GM12878 (cell line): ENCODE measurements at regions of chr12 and their contacts with region 1.

Region 1: DNA sequence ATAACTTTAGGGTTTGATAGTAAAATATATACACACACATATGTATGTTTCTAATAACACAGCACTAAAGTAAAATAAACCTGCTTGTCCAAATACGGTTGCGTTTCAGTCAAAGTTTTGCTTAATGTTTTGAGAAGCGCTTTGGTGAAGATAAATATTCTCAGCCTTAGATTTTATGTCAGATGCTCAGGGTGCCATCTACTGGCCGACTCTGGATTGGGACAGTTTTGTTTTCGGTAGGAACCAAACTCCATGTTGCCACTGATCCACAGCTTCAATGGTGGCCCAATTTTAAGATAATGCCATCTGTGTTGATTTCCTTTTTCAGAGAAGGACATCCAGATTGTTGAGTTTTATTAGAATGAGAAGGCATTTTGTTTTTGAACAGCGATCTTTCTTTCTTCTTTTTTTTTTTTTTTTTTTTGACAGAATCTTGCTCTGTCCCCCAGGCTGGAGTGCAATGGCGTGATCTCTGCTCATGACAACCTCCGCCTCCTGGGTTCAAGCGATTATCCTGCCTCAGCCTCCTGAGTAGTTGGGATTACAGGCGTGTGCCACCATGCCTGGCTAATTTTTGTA is 43.1 kb downstream of the LLPH start:
- DNase-seq: no peak
- ATAC-seq: peak; percentile 95
- H3K4me3 ChIP-seq: no peak overlapping the region
- H3K27ac ChIP-seq: peak overlapping the region; percentile 28; the same call in 1 of the 2 replicates
- H3K4me1 ChIP-seq: no peaks in the 10 kb centered on the region
- H3K27me3 ChIP-seq: no peaks in the 10 kb centered on the region
- CTCF ChIP-seq: peak; percentile 74 to 90 (median 85)
- EP300 ChIP-seq: no peak
- POLR2A ChIP-seq: no peak
- RAD21 ChIP-seq: peak; percentile 97

Region 2: DNA sequence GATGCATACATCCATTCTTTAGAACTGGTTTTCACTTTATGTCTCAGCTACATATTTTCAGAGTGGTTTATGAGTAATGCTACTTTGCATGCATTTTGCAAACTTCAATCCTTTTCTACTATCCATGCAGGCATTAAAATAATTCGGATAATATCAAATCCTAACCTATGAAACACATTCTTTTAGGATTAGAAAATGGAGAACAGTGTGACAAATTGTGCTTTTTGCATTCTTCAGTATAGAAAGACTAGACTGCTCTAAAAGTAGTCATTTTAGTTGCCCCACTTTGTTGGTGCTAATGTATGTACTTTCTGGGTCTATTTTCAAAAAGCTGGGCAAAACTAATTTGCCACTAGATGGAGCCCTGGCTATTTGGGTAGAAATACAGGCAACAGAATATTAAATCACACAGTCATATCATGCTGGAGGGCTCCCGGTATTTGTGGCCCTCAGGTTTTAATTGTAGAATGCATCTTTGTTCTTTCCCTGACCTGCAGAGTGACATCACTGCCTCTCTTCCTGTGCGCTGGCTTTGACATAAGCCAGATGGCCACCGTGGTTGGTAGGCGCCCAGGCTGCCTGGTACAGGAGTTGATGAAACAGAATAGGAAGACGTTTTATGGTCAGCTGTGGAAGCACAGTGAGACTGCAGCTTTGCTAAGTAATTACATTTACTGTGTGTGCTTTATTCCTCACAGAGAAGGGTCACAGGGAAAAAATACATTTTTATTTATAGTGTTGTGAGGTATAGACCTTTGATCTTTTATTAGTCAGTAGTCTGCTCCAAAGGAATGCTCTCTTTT is 780.9 kb before region 1 on chr12:
- CTCF ChIA-PET with region 1: interaction called, 3 read pairs
- POLR2A ChIA-PET with region 1: no interaction called
- RAD21 ChIA-PET with region 1: no interaction called
- SMC1A ChIA-PET with region 1: interaction called, 3 read pairs
- in situ Hi-C with region 1: no loop called
- intact Hi-C with region 1: loop called (anchors 5 kb)
- DNase-seq: no peak
- ATAC-seq: peak; percentile 76
- H3K4me3 ChIP-seq: no peak overlapping the region
- H3K27ac ChIP-seq: no peak overlapping the region
- H3K4me1 ChIP-seq: no peaks in the 10 kb centered on the region
- H3K27me3 ChIP-seq: no peaks in the 10 kb centered on the region
- CTCF ChIP-seq: peak; percentile 46 to 60 (median 56)
- EP300 ChIP-seq: no peak
- POLR2A ChIP-seq: no peak
- RAD21 ChIP-seq: peak; percentile 70

Region 3: GRCh38 chr12:65602610-65603295 is 484.7 kb before region 1 on chr12:
- CTCF ChIA-PET with region 1: interaction called, 38 read pairs
- POLR2A ChIA-PET with region 1: no interaction called
- RAD21 ChIA-PET with region 1: interaction called, 41 read pairs
- SMC1A ChIA-PET with region 1: interaction called, 16 read pairs
- in situ Hi-C with region 1: loop called (anchors 5 kb)
- intact Hi-C with region 1: loop called (anchors 1 kb)
- DNase-seq: no peak
- ATAC-seq: peak; percentile 94
- H3K4me3 ChIP-seq: no peak overlapping the region
- H3K27ac ChIP-seq: no peak overlapping the region
- H3K4me1 ChIP-seq: no peaks in the 10 kb centered on the region
- H3K27me3 ChIP-seq: peaks cover 0 to 3% of the 10 kb centered on the region in 2 experiments; a peak in 1 of 4 replicates
- CTCF ChIP-seq: peak; percentile 68 to 73 (median 70)
- EP300 ChIP-seq: no peak
- POLR2A ChIP-seq: no peak
- RAD21 ChIP-seq: peak; percentile 90

Region 4: DNA sequence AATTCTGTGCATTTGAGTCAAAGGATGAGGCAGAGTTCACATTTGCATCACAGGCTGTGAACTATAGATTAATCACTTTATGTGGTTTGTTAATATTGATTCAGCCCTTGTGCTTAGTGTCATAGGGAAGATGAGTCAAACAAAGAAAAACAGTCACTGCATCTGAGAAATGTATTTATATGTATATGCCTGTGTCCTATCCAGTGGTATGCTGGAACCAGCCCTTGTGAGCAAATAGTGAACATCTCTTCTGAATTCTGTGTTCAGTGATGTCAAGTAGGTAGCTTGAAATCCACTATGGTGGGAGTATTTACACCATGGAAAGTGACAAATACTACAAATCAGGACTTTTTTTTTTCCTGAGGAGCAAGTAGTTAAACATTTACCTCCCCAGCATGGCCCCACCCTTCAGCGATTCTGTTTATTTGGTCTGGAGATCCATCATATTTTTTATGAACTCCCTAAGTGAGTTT is 134.7 kb before region 1 on chr12:
- CTCF ChIA-PET with region 1: interaction called, 6 read pairs
- POLR2A ChIA-PET with region 1: no interaction called
- RAD21 ChIA-PET with region 1: interaction called, 3 read pairs
- SMC1A ChIA-PET with region 1: interaction called, 3 read pairs
- in situ Hi-C with region 1: no loop called
- intact Hi-C with region 1: loop called (anchors 1 kb)
- DNase-seq: no peak
- ATAC-seq: peak; percentile 72
- H3K4me3 ChIP-seq: no peak overlapping the region
- H3K27ac ChIP-seq: no peak overlapping the region
- H3K4me1 ChIP-seq: peaks cover 4% of the 10 kb centered on the region
- H3K27me3 ChIP-seq: no peaks in the 10 kb centered on the region
- CTCF ChIP-seq: no peak
- EP300 ChIP-seq: no peak
- POLR2A ChIP-seq: no peak
- RAD21 ChIP-seq: no peak

Region 5: DNA sequence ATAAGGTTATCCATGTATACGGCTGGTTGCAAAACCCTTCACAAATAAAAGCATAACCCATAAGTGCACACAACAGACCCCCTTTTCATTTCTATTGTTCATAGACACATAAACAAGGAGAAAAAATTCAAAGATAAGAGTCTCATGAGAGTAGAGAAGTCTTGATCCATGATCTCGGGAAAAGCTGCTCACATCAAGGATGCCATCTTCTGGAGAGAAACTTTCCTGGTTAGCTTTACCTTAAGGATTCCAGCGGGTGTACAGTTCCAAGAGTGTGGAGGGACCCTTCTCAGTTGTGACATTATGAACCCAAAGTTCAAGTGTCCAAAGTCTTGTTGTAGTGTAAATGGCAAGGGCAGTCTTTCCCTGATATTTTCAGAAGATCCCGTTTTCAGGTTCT is 101.4 kb before region 1 on chr12:
- CTCF ChIA-PET with region 1: interaction called, 6 read pairs
- POLR2A ChIA-PET with region 1: interaction called, 3 read pairs
- RAD21 ChIA-PET with region 1: interaction called, 5 read pairs
- SMC1A ChIA-PET with region 1: interaction called, 5 read pairs
- in situ Hi-C with region 1: no loop called
- intact Hi-C with region 1: loop called (anchors 2 kb)
- DNase-seq: no peak
- ATAC-seq: no peak
- H3K4me3 ChIP-seq: no peak overlapping the region
- H3K27ac ChIP-seq: no peak overlapping the region
- H3K4me1 ChIP-seq: no peaks in the 10 kb centered on the region
- H3K27me3 ChIP-seq: no peaks in the 10 kb centered on the region
- CTCF ChIP-seq: no peak
- EP300 ChIP-seq: no peak
- POLR2A ChIP-seq: no peak
- RAD21 ChIP-seq: no peak

Region 6: GRCh38 chr12:66072135-66072534 is 15.3 kb before region 1 on chr12:
- CTCF ChIA-PET with region 1: interaction called, 5 read pairs
- POLR2A ChIA-PET with region 1: no interaction called
- RAD21 ChIA-PET with region 1: interaction called, 8 read pairs
- SMC1A ChIA-PET with region 1: interaction called, 14 read pairs
- in situ Hi-C with region 1: no loop called
- intact Hi-C with region 1: no loop called
- DNase-seq: no peak
- ATAC-seq: peak; percentile 83
- H3K4me3 ChIP-seq: no peak overlapping the region
- H3K27ac ChIP-seq: peak overlapping the region; percentile 93
- H3K4me1 ChIP-seq: peaks cover 24% of the 10 kb centered on the region
- H3K27me3 ChIP-seq: no peaks in the 10 kb centered on the region
- CTCF ChIP-seq: no peak
- EP300 ChIP-seq: 0 out of 4 replicates have a peak, but pooled peaks have one; percentile 32 to 37
- POLR2A ChIP-seq: no peak
- RAD21 ChIP-seq: no peak; the same call in 1 of the 2 replicates

Region 7: DNA sequence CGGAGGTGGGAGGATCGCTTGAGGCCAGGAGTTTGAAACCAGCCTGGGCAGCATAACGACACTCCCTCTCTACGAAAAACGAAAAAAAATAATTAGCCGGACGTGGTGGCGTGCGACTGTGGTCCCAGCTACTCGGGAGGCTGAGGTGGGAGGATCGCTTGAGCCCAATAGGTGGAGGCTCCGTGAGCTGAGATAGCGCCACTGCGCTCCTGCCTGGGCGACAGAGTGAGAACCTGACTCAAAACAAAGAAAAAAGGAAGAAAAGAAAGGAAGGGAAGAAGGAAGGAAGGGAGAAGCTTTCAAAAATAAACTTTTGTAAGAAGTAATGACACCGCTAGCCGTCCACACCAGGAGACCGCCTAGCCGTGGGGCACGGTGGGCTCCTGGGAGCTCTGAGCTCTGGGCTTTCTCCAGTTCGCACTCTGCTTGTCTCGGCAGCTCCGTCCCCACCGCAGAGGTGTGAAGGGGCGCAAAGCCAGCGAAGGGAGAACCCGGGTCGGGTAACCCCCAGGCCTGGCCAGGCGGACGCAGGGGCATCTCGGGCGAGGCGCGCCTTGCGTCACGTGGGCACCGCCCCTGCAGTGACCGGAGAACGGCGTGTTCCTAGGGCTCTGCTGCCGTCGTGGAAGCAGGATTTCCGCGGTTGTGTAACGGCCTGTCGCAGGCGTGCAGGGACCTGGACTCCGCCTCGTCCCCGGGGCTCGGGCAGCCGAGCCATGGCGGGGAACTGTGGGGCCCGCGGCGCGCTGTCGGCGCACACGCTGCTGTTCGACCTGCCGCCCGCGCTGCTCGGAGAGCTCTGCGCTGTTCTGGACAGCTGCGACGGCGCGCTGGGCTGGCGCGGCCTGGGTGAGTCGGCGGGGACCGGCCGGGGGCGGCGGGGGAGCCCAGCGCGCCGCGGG is 101.4 kb after region 1 on chr12 and contains the start of gene IRAK3:
- CTCF ChIA-PET with region 1: no interaction called
- POLR2A ChIA-PET with region 1: no interaction called
- RAD21 ChIA-PET with region 1: no interaction called
- SMC1A ChIA-PET with region 1: no interaction called
- in situ Hi-C with region 1: no loop called
- intact Hi-C with region 1: no loop called
- DNase-seq: no peak
- ATAC-seq: peak; percentile 79
- H3K4me3 ChIP-seq: peak within 1 kb of the TSS; percentile 77; the same call in 1 of the 2 replicates
- H3K27ac ChIP-seq: peak within 1 kb of the TSS; percentile 56
- H3K4me1 ChIP-seq: peaks cover 9% of the 10 kb centered on the region
- H3K27me3 ChIP-seq: peaks cover 0 to 5% of the 10 kb centered on the region in 2 experiments; a peak in 1 of 4 replicates
- CTCF ChIP-seq: no peak
- EP300 ChIP-seq: no peak
- POLR2A ChIP-seq: peak; percentile 76
- RAD21 ChIP-seq: no peak
- polyA plus RNA-seq, gene IRAK3: 1.4 to 1.5 TPM